CD8-positive, alpha-beta memory T cell (primary cell): ENCODE measurements at regions of chr1 and their contacts with region 1.

Region 1: GRCh38 chr1:153958111-153958960 is at the start of gene CRTC2:
- DNase-seq: peak; percentile 95 to 98 (median 95)
- H3K4me3 ChIP-seq: peak within 1 kb of the TSS; percentile 74
- H3K4me3 Mint-ChIP-seq: peak within 1 kb of the TSS; percentile 93 to 99 (median 98)
- H3K27ac ChIP-seq: peak within 1 kb of the TSS; percentile 78
- H3K27ac Mint-ChIP-seq: peak within 1 kb of the TSS; percentile 61 to 98 (median 98)
- H3K4me1 ChIP-seq: peaks cover 52% of the 10 kb centered on the region
- H3K4me1 Mint-ChIP-seq: peaks cover 51 to 70% (median 57%) of the 10 kb centered on the region in 3 donors
- H3K27me3 ChIP-seq: no peaks in the 10 kb centered on the region
- H3K27me3 Mint-ChIP-seq: no peaks in the 10 kb centered on the region
- total RNA-seq, gene CRTC2: 53.9 to 63.2 TPM

Region 2: DNA sequence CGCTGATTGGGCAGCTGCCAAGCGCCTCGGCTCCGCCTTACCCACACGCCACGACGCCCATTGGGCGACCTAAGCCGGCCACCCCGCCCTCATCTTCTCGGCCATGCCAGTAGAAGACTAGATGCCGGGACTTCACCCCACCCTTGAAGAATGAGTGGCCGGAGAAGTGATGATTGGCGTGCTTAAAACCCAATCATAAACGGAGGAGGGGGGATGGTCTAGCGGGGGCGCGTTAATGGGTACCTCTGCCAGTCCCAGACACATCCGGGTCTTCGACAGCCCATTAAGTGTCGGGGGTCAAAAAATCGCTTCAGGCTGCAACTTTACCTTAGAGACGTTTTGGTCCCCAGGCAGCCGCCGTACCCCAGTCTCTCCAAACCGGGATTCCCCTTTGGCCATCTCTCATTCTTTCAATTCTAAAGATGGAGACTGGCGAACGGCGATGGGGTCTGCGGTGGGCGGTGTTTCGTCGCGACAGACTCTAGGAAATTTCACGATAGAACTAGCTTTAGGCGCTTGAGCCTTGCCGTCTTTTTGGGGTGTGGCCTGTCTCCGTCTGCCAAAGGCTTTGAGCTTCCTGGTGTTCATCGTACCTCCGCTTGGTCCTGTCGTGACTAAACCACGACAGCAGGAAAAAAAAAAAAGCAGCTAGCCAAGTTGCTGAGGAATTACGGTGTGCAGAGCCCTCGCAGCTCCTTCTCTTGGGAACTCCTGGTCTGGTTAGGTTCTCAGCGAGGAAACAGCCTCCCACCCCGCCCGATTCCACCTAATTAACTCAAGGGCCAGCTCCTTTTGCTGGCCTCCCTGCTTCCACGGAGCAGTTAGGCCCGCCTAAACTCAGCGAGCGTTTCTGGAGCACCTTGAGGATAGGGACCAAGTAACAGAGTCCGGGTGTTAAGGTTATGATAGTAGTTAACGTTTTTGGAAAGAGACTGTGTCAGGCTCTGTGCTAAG is 35.1 kb before region 1 on chr1 and contains the start of gene GATAD2B:
- CTCF ChIA-PET with region 1: interaction called, 3 read pairs
- POLR2A ChIA-PET with region 1: interaction called, 12 read pairs
- DNase-seq: peak; percentile 97 to 100 (median 99)
- H3K4me3 ChIP-seq: peak within 1 kb of the TSS; percentile 98
- H3K4me3 Mint-ChIP-seq: peak within 1 kb of the TSS; percentile 79 to 97 (median 94)
- H3K27ac ChIP-seq: peak within 1 kb of the TSS; percentile 96
- H3K27ac Mint-ChIP-seq: peak within 1 kb of the TSS; percentile 95 to 100 (median 98)
- H3K4me1 ChIP-seq: peaks cover 44% of the 10 kb centered on the region
- H3K4me1 Mint-ChIP-seq: peaks cover 46 to 60% (median 52%) of the 10 kb centered on the region in 3 donors
- H3K27me3 ChIP-seq: no peaks in the 10 kb centered on the region
- H3K27me3 Mint-ChIP-seq: peaks cover 0 to 4% of the 10 kb centered on the region in 2 donors
- total RNA-seq, gene GATAD2B: 64.9 to 71.9 TPM

Region 3: DNA sequence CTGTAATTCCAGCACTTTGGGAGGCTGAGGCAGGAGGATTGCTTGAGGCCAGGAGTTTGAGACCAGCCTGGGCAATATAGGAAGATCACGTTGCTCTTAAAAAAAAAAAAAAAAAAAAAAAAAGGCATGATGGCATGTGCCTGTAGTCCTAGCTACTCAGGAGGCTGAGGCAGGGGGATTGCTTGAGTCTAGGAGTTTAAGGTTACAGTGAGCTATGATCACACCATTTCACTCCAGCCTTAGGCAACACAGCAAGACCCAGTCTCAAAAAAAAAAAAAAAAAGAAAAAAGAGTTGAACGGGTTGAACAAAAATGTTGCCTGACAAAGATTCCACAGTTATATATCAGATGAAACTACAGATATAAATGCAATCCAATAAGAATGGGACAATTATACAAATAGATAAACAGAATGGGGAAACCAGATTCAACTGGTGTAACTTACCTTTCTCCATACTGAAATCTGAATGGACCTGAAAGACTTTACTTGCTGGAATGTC is 51.2 kb after region 1 on chr1:
- CTCF ChIA-PET with region 1: no interaction called
- POLR2A ChIA-PET with region 1: no interaction called
- DNase-seq: no peak
- H3K4me3 ChIP-seq: no peak overlapping the region
- H3K4me3 Mint-ChIP-seq: no peak overlapping the region
- H3K27ac ChIP-seq: no peak overlapping the region
- H3K27ac Mint-ChIP-seq: peak overlapping the region in 1 of 8 donors; percentile 20
- H3K4me1 ChIP-seq: no peaks in the 10 kb centered on the region
- H3K4me1 Mint-ChIP-seq: no peaks in the 10 kb centered on the region
- H3K27me3 ChIP-seq: no peaks in the 10 kb centered on the region
- H3K27me3 Mint-ChIP-seq: peaks cover 0 to 2% of the 10 kb centered on the region in 2 donors